ENCODE measurements at regions of chr14 and their contacts with region 1.

Region 1: DNA sequence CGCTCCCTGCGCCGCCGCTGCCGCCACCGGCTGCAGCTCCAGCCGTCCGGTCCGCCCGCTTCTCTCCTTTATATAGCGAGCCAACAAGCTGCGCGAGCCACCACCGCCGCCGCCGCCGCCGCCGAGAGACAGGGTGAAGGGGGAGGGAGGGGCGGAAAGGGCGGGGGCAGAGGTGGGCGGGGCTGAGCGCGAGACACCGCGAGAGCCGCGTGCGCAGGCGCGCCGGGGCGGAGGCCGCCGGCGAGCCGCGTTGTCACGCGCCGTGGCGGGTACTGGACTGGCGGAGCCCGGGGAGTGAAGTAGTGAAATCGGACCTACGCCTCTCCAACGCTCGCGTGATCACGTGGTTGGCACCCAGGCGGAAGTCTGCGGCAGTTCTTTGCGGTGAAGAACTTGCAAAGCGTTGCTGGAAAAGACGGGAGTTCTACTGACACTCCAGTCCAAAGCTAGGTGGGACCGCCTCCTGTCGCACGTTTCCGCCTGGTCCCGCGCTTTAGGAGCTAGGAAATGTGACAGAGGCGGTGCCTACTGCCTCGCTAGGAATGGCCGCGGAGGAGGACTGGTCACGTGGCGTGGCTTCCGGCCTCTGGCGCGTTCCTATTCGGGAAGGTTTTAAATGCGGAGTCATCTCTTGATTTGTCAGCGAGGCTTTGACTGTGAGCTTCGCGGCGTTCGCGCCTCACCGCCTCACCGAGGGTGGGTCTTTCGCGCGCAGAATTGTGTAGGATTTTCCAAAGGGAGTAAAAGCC is at the start of gene GTF2A1:
- DNase-seq: peak; percentile 87 to 98 (median 95)
- ATAC-seq: peak; percentile 63
- H3K4me3 ChIP-seq: peak within 1 kb of the TSS; percentile 92
- H3K4me3 Mint-ChIP-seq: peak within 1 kb of the TSS; percentile 100
- H3K27ac ChIP-seq: peak within 1 kb of the TSS; percentile 97 to 98
- H3K27ac Mint-ChIP-seq: peak within 1 kb of the TSS; percentile 99
- H3K4me1 ChIP-seq: peaks cover 14% of the 10 kb centered on the region
- H3K4me1 Mint-ChIP-seq: peaks cover 46% of the 10 kb centered on the region
- H3K27me3 ChIP-seq: no peaks in the 10 kb centered on the region
- H3K27me3 Mint-ChIP-seq: peaks cover 9% of the 10 kb centered on the region
- CTCF ChIP-seq: no peak
- total RNA-seq, gene GTF2A1: 11.5 to 12.8 TPM

Region 2: GRCh38 chr14:80941241-80942182 is 279.5 kb before region 1 on chr14 and contains the start of gene CEP128:
- CTCF ChIA-PET with region 1: no interaction called
- POLR2A ChIA-PET with region 1: interaction called, 16 read pairs
- intact Hi-C with region 1: no loop called
- DNase-seq: peak; percentile 68 to 92 (median 78)
- ATAC-seq: peak; percentile 82
- H3K4me3 ChIP-seq: peak within 1 kb of the TSS; percentile 65
- H3K4me3 Mint-ChIP-seq: peak within 1 kb of the TSS; percentile 93
- H3K27ac ChIP-seq: peak within 1 kb of the TSS; percentile 15 to 18
- H3K27ac Mint-ChIP-seq: peak within 1 kb of the TSS; percentile 87
- H3K4me1 ChIP-seq: peaks cover 17% of the 10 kb centered on the region
- H3K4me1 Mint-ChIP-seq: peaks cover 33% of the 10 kb centered on the region
- H3K27me3 ChIP-seq: no peaks in the 10 kb centered on the region
- H3K27me3 Mint-ChIP-seq: peaks cover 4% of the 10 kb centered on the region
- CTCF ChIP-seq: no peak
- total RNA-seq, gene CEP128: 12.3 to 13.0 TPM

Region 3: DNA sequence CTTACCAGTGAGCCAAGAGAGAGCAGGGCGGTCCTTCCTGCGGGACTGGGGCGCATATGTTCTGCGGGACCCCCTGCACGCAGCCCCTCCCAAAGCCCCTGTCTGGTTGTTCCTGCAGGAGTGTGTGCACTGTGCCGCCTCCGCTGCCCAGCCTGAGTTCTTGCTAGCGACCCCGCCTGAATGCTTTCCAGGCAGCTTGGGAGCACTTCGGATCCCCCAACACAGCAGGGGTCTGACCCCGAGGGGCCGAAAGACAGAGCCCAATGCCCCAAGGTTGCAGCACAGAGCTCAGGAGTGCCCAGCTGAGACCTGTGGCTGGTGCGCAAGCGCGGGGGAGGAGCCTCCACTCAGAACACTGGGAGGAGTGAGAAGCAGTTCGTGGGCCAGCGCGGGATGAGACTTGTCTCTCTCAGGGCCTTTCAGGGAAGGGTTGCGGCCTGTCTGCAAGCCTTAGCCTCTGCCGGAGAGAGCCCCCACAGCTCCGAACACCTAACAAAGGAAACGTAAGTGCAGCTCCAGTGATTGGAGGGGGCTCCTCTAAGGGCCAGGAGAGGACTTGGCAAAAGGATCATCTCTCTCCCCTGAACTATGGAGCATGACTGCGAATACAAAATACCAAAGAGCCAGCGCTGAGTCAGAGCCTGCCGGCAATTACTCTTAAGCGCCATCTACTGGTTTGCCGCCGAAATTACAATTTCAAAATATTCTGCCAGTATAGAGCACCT is 50.7 kb before region 1 on chr14:
- CTCF ChIA-PET with region 1: interaction called, 5 read pairs
- POLR2A ChIA-PET with region 1: interaction called, 42 read pairs
- intact Hi-C with region 1: loop called (anchors 2 kb)
- DNase-seq: peak; percentile 79 to 93 (median 86)
- ATAC-seq: peak; percentile 97
- H3K4me3 ChIP-seq: peak overlapping the region; percentile 82
- H3K4me3 Mint-ChIP-seq: peak overlapping the region; percentile 88
- H3K27ac ChIP-seq: peak overlapping the region; percentile 58 to 72
- H3K27ac Mint-ChIP-seq: peak overlapping the region; percentile 94
- H3K4me1 ChIP-seq: peaks cover 20% of the 10 kb centered on the region
- H3K4me1 Mint-ChIP-seq: peaks cover 28% of the 10 kb centered on the region
- H3K27me3 ChIP-seq: no peaks in the 10 kb centered on the region
- H3K27me3 Mint-ChIP-seq: no peaks in the 10 kb centered on the region
- CTCF ChIP-seq: peak; percentile 86

Region 4: GRCh38 chr14:81200054-81200453 is 20.9 kb before region 1 on chr14:
- CTCF ChIA-PET with region 1: interaction called, 5 read pairs
- POLR2A ChIA-PET with region 1: interaction called, 11 read pairs
- intact Hi-C with region 1: no loop called
- DNase-seq: peak in 3 of 14 experiments; percentile 17 to 39 (median 39)
- ATAC-seq: peak; percentile 67
- H3K4me3 ChIP-seq: no peak overlapping the region
- H3K4me3 Mint-ChIP-seq: no peak overlapping the region
- H3K27ac ChIP-seq: no peak overlapping the region
- H3K27ac Mint-ChIP-seq: peak overlapping the region; percentile 77
- H3K4me1 ChIP-seq: peaks cover 5% of the 10 kb centered on the region
- H3K4me1 Mint-ChIP-seq: peaks cover 43% of the 10 kb centered on the region
- H3K27me3 ChIP-seq: no peaks in the 10 kb centered on the region
- H3K27me3 Mint-ChIP-seq: no peaks in the 10 kb centered on the region
- CTCF ChIP-seq: no peak

Region 5: GRCh38 chr14:81464247-81465002 is 243.4 kb after region 1 on chr14:
- CTCF ChIA-PET with region 1: no interaction called
- POLR2A ChIA-PET with region 1: interaction called, 10 read pairs
- intact Hi-C with region 1: no loop called
- DNase-seq: peak in 13 of 14 experiments; percentile 10 to 86 (median 47)
- ATAC-seq: peak; percentile 80
- H3K4me3 ChIP-seq: peak overlapping the region; percentile 66
- H3K4me3 Mint-ChIP-seq: peak overlapping the region; percentile 86
- H3K27ac ChIP-seq: peak overlapping the region in 1 of 2 donors; percentile 36
- H3K27ac Mint-ChIP-seq: peak overlapping the region; percentile 86
- H3K4me1 ChIP-seq: peaks cover 4% of the 10 kb centered on the region
- H3K4me1 Mint-ChIP-seq: peaks cover 8% of the 10 kb centered on the region
- H3K27me3 ChIP-seq: no peaks in the 10 kb centered on the region
- H3K27me3 Mint-ChIP-seq: no peaks in the 10 kb centered on the region
- CTCF ChIP-seq: peak; percentile 93

Measured in CD4-positive, alpha-beta T cell (primary cell).